Tibial artery (tissue), 4 donors: ENCODE measurements at regions of chrX and their contacts with region 1.

Region 1: GRCh38 chrX:24838629-24839028 is 144.9 kb downstream of the POLA1 start:
- DNase-seq: no peak
- H3K4me3 ChIP-seq: no peak overlapping the region
- H3K27ac ChIP-seq: no peak overlapping the region
- H3K4me1 ChIP-seq: peaks cover 0 to 6% (median 2%) of the 10 kb centered on the region in 4 donors
- H3K27me3 ChIP-seq: no peaks in the 10 kb centered on the region
- CTCF ChIP-seq: peak; percentile 29 to 35

Region 2: GRCh38 chrX:25144043-25144940 is 305.7 kb after region 1 on chrX:
- intact Hi-C with region 1: loop called (anchors 5 kb)
- DNase-seq: peak; percentile 65 to 68
- H3K4me3 ChIP-seq: peak overlapping the region in 1 of 2 donors; percentile 22
- H3K27ac ChIP-seq: no peak overlapping the region
- H3K4me1 ChIP-seq: peaks cover 0 to 5% (median 0%) of the 10 kb centered on the region in 4 donors
- H3K27me3 ChIP-seq: no peaks in the 10 kb centered on the region
- CTCF ChIP-seq: peak; percentile 61